Naive thymus-derived CD4-positive, alpha-beta T cell (primary cell): ENCODE measurements at regions of chr14 and their contacts with region 1.

Region 1: GRCh38 chr14:32076278-32077080 is 625 bp upstream of the ARHGAP5 start:
- DNase-seq: peak; percentile 61 to 84 (median 76)
- ATAC-seq: peak; percentile 77
- H3K4me3 ChIP-seq: peak overlapping the region; percentile 99
- H3K4me3 Mint-ChIP-seq: peak overlapping the region; percentile 85 to 100 (median 99)
- H3K27ac ChIP-seq: peak overlapping the region; percentile 71
- H3K27ac Mint-ChIP-seq: peak overlapping the region; percentile 88 to 99 (median 96)
- H3K4me1 ChIP-seq: peaks cover 0 to 4% of the 10 kb centered on the region in 2 donors
- H3K4me1 Mint-ChIP-seq: peaks cover 24 to 51% (median 42%) of the 10 kb centered on the region in 7 donors
- H3K27me3 ChIP-seq: peaks cover 0 to 6% of the 10 kb centered on the region in 2 donors
- H3K27me3 Mint-ChIP-seq: peaks cover 0 to 21% (median 0%) of the 10 kb centered on the region in 5 donors

Region 2: DNA sequence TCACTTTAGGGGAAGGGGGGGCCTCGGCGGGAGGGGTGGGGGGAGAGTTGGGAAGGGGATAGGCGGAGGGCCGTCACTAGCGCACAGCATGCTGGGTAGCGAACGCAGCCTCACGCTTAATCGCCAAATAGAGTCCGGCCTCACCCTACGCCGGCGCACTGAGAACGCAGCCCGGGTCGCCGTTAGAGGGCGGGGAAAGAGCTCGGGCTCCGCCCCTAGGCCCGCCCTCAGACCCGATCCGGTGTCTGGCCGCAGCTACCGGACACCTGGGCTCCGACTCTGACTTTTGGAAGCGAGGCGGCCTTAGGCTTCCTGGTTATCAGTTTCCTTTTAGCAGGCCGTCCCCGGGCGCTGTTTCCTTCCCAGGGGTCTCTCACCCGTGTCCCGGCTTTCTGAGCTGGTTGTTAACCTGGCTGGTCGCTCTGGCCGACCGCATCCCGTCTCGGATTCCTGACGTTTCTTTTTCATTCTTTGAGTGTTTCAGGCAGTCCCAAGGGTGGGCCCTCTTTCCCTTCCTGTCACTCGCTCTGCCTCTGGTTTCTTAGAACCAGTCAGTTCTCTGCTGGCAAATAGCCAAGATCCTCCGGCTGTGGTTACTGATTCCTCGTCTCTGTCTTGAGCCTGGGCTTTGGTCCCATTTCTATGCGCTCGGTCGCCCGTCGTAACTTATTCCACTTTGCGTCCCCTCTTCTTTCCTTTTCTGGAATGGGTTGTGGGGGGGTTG is 1049.9 kb before region 1 on chr14:
- CTCF ChIA-PET with region 1: no interaction called
- POLR2A ChIA-PET with region 1: no interaction called
- intact Hi-C with region 1: loop called (anchors 1 to 2 kb)
- DNase-seq: peak; percentile 74 to 93 (median 80)
- ATAC-seq: peak; percentile 97
- H3K4me3 ChIP-seq: peak overlapping the region; percentile 84
- H3K4me3 Mint-ChIP-seq: peak overlapping the region; percentile 86 to 100 (median 96)
- H3K27ac ChIP-seq: peak overlapping the region; percentile 91
- H3K27ac Mint-ChIP-seq: peak overlapping the region; percentile 89 to 98 (median 96)
- H3K4me1 ChIP-seq: no peaks in the 10 kb centered on the region
- H3K4me1 Mint-ChIP-seq: peaks cover 38 to 62% (median 49%) of the 10 kb centered on the region in 7 donors
- H3K27me3 ChIP-seq: no peaks in the 10 kb centered on the region
- H3K27me3 Mint-ChIP-seq: no peaks in the 10 kb centered on the region

Region 3: DNA sequence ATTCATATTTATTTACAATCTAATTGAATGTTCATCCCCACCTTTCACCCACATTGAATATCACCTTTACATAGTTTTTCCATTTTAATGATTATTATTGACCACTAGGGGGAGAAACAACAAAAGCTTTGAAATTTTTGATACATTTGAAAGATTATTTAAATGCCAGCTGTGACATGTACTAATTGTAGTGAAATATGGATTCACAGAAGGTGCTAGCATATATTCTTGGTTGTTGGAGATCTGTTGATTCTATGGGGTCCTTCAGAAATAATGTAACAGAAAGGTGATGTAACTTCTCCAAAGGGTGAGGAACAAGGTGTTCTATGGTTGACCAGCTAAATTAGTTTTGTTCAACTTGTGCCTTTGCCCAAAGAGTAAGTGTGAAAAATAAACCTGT is 566.3 kb before region 1 on chr14:
- CTCF ChIA-PET with region 1: no interaction called
- POLR2A ChIA-PET with region 1: no interaction called
- intact Hi-C with region 1: loop called in 1 of 2 experiments (anchors 1 kb)
- DNase-seq: peak in 5 of 9 donors; percentile 7 to 19 (median 12)
- ATAC-seq: no peak
- H3K4me3 ChIP-seq: no peak overlapping the region
- H3K4me3 Mint-ChIP-seq: no peak overlapping the region
- H3K27ac ChIP-seq: no peak overlapping the region
- H3K27ac Mint-ChIP-seq: no peak overlapping the region
- H3K4me1 ChIP-seq: no peaks in the 10 kb centered on the region
- H3K4me1 Mint-ChIP-seq: no peaks in the 10 kb centered on the region
- H3K27me3 ChIP-seq: no peaks in the 10 kb centered on the region
- H3K27me3 Mint-ChIP-seq: peaks cover 0 to 4% (median 0%) of the 10 kb centered on the region in 5 donors

Region 4: GRCh38 chr14:31945074-31945613 is 131.3 kb before region 1 on chr14:
- CTCF ChIA-PET with region 1: no interaction called
- POLR2A ChIA-PET with region 1: interaction called, 22 read pairs
- intact Hi-C with region 1: loop called in 1 of 2 experiments (anchors 1 kb)
- DNase-seq: peak in 8 of 9 donors; percentile 7 to 75 (median 48)
- ATAC-seq: peak; percentile 83
- H3K4me3 ChIP-seq: peak overlapping the region; percentile 29
- H3K4me3 Mint-ChIP-seq: peak overlapping the region in 9 of 10 donors; percentile 30 to 84 (median 71)
- H3K27ac ChIP-seq: peak overlapping the region; percentile 56
- H3K27ac Mint-ChIP-seq: peak overlapping the region; percentile 62 to 94 (median 90)
- H3K4me1 ChIP-seq: peaks cover 10 to 28% of the 10 kb centered on the region in 2 donors
- H3K4me1 Mint-ChIP-seq: peaks cover 21 to 64% (median 33%) of the 10 kb centered on the region in 7 donors
- H3K27me3 ChIP-seq: no peaks in the 10 kb centered on the region
- H3K27me3 Mint-ChIP-seq: peaks cover 0 to 4% (median 0%) of the 10 kb centered on the region in 5 donors

Region 5: GRCh38 chr14:32197922-32198321 is 121.4 kb after region 1 on chr14:
- CTCF ChIA-PET with region 1: interaction called, 5 read pairs
- POLR2A ChIA-PET with region 1: interaction called, 46 read pairs
- intact Hi-C with region 1: loop called (anchors 1 kb)
- DNase-seq: no peak
- ATAC-seq: no peak
- H3K4me3 ChIP-seq: no peak overlapping the region
- H3K4me3 Mint-ChIP-seq: no peak overlapping the region
- H3K27ac ChIP-seq: no peak overlapping the region
- H3K27ac Mint-ChIP-seq: no peak overlapping the region
- H3K4me1 ChIP-seq: peaks cover 0 to 9% of the 10 kb centered on the region in 2 donors
- H3K4me1 Mint-ChIP-seq: peaks cover 0 to 25% (median 12%) of the 10 kb centered on the region in 7 donors
- H3K27me3 ChIP-seq: no peaks in the 10 kb centered on the region
- H3K27me3 Mint-ChIP-seq: peaks cover 0 to 7% (median 2%) of the 10 kb centered on the region in 5 donors

Region 6: DNA sequence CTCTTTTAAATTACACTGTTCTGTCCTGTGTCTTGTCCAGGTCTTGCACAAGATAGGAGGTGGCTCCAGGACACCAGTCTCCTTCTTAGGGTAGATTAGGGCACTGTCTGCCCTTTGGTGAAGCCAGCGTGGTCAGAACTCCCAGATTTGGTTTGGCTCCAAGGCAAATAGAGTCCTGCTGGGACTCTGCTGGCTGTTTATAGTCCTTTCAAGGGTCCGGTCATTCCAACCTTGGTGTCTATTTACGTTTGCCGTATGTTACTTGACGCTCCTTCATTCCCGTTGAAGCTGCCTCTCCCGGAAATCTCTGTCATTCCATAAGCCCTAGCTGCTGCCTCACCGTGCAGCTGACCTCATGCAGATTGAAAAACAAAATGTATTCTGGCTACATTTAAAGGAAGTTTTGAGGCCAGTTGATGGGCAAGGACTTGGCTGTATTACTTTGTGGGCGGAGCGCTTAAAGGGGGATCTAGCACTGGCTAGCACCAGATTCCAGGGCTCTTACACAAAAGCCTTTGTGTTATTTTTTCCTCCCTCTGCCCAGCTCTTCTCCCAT is 433.2 kb after region 1 on chr14:
- CTCF ChIA-PET with region 1: no interaction called
- POLR2A ChIA-PET with region 1: no interaction called
- intact Hi-C with region 1: no loop called
- DNase-seq: no peak
- ATAC-seq: no peak
- H3K4me3 ChIP-seq: no peak overlapping the region
- H3K4me3 Mint-ChIP-seq: no peak overlapping the region
- H3K27ac ChIP-seq: no peak overlapping the region
- H3K27ac Mint-ChIP-seq: no peak overlapping the region
- H3K4me1 ChIP-seq: no peaks in the 10 kb centered on the region
- H3K4me1 Mint-ChIP-seq: no peaks in the 10 kb centered on the region
- H3K27me3 ChIP-seq: peaks cover 0 to 3% of the 10 kb centered on the region in 2 donors
- H3K27me3 Mint-ChIP-seq: peaks cover 0 to 6% (median 2%) of the 10 kb centered on the region in 5 donors

Region 7: GRCh38 chr14:32560209-32560857 is 483.9 kb after region 1 on chr14:
- CTCF ChIA-PET with region 1: no interaction called
- POLR2A ChIA-PET with region 1: no interaction called
- intact Hi-C with region 1: loop called (anchors 1 to 10 kb)
- DNase-seq: peak in 4 of 9 donors; percentile 7 to 28 (median 10)
- ATAC-seq: peak; percentile 55
- H3K4me3 ChIP-seq: no peak overlapping the region
- H3K4me3 Mint-ChIP-seq: no peak overlapping the region
- H3K27ac ChIP-seq: no peak overlapping the region
- H3K27ac Mint-ChIP-seq: no peak overlapping the region
- H3K4me1 ChIP-seq: no peaks in the 10 kb centered on the region
- H3K4me1 Mint-ChIP-seq: peaks cover 12 to 20% (median 15%) of the 10 kb centered on the region in 7 donors
- H3K27me3 ChIP-seq: no peaks in the 10 kb centered on the region
- H3K27me3 Mint-ChIP-seq: no peaks in the 10 kb centered on the region